ENCODE measurements at regions of chr9 and their contacts with region 1.

Region 1: GRCh38 chr9:95875305-95876137 is at the start of gene ERCC6L2:
- DNase-seq: peak; percentile 93 to 96
- H3K4me3 ChIP-seq: no peak within 1 kb of the TSS; the same call in 1 of the 2 replicates
- H3K27ac ChIP-seq: no peak within 1 kb of the TSS; the same call in 1 of the 2 replicates
- H3K4me1 ChIP-seq: peaks cover 11% of the 10 kb centered on the region
- H3K27me3 ChIP-seq: no peaks in the 10 kb centered on the region
- CTCF ChIP-seq: no peak
- total RNA-seq, gene ERCC6L2: 38.1 and 41.4 TPM in 2 replicates

Region 2: GRCh38 chr9:95696701-95697100 is 178.8 kb before region 1 on chr9:
- CTCF ChIA-PET with region 1: no interaction called
- POLR2A ChIA-PET with region 1: no interaction called
- intact Hi-C with region 1: no loop called
- DNase-seq: no peak
- H3K4me3 ChIP-seq: no peak overlapping the region
- H3K27ac ChIP-seq: no peak overlapping the region
- H3K4me1 ChIP-seq: no peaks in the 10 kb centered on the region
- H3K27me3 ChIP-seq: peaks cover 56% of the 10 kb centered on the region
- CTCF ChIP-seq: no peak

Region 3: DNA sequence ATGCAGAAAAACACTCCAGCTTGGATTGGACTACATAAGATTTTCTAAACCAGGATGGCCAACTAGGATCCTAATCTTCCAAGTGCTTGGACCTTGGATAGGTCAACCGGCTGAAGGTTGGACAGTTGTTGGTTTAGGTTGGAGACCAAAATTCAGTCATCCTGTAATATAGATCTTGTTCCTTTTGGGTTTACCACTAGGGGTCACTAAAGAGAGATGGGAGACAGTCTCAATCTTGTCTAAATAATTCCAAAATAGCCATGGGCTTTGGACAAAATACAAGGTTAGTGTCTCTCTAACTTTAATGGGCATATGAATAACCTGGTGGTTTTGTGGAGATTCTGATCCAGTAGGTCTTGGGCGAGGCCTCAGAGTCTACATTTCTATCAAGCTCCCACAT is 148.8 kb before region 1 on chr9:
- CTCF ChIA-PET with region 1: no interaction called
- POLR2A ChIA-PET with region 1: interaction called, 4 read pairs
- intact Hi-C with region 1: loop called (anchors 5 kb)
- DNase-seq: no peak
- H3K4me3 ChIP-seq: no peak overlapping the region
- H3K27ac ChIP-seq: no peak overlapping the region
- H3K4me1 ChIP-seq: no peaks in the 10 kb centered on the region
- H3K27me3 ChIP-seq: peaks cover 47% of the 10 kb centered on the region; the same call in 1 of the 2 replicates
- CTCF ChIP-seq: peak; percentile 74

Region 4: DNA sequence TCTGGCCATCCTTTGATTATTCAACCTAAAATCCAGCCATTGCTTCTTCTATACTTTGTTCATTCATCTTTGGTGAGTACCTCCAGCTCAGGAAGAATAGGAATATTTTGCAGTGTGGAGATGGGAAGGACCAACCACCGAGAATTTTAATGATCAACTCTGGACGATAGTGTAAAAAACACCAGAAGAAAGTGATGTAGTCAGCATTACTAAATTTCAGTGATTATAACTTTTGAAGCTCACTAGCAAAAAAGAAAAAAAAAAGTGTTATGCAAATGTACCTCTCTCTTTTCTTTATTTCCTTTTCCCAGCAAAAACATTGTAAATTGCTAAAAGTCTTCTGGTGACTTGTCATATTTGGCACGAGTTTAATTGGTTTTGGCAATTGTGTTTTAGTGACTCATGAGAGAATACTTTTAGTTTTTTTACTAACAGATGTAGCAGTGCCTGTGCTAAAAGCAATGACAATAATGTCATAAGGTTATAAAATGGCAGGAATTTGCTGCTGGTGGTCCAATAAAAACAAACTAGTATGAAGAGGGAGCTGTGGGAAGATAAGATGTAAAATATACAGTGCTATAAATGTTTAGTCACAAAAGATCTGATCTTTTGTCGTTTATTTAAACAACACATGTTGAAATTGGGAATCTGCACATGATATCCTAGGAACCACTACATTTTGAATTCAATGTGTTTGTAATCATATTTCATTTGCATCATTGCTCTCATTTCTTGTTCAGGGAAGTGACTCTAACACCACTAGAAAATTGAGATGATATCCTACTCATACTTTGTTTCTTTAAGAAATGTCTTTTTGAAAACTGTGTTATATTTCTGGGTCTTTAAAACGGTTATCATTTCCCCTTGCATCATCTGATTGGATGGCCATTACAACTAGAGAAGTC is 81.3 kb before region 1 on chr9:
- CTCF ChIA-PET with region 1: no interaction called
- POLR2A ChIA-PET with region 1: no interaction called
- intact Hi-C with region 1: loop called (anchors 5 kb)
- DNase-seq: peak in 1 of 2 experiments; percentile 64
- H3K4me3 ChIP-seq: no peak overlapping the region
- H3K27ac ChIP-seq: no peak overlapping the region
- H3K4me1 ChIP-seq: no peaks in the 10 kb centered on the region
- H3K27me3 ChIP-seq: no peaks in the 10 kb centered on the region
- CTCF ChIP-seq: no peak

Region 5: GRCh38 chr9:95815143-95815542 is 60.4 kb before region 1 on chr9:
- CTCF ChIA-PET with region 1: no interaction called
- POLR2A ChIA-PET with region 1: no interaction called
- intact Hi-C with region 1: loop called (anchors 2 kb)
- DNase-seq: peak in 1 of 2 experiments; percentile 52
- H3K4me3 ChIP-seq: no peak overlapping the region
- H3K27ac ChIP-seq: no peak overlapping the region
- H3K4me1 ChIP-seq: no peaks in the 10 kb centered on the region
- H3K27me3 ChIP-seq: no peaks in the 10 kb centered on the region
- CTCF ChIP-seq: no peak

Region 6: DNA sequence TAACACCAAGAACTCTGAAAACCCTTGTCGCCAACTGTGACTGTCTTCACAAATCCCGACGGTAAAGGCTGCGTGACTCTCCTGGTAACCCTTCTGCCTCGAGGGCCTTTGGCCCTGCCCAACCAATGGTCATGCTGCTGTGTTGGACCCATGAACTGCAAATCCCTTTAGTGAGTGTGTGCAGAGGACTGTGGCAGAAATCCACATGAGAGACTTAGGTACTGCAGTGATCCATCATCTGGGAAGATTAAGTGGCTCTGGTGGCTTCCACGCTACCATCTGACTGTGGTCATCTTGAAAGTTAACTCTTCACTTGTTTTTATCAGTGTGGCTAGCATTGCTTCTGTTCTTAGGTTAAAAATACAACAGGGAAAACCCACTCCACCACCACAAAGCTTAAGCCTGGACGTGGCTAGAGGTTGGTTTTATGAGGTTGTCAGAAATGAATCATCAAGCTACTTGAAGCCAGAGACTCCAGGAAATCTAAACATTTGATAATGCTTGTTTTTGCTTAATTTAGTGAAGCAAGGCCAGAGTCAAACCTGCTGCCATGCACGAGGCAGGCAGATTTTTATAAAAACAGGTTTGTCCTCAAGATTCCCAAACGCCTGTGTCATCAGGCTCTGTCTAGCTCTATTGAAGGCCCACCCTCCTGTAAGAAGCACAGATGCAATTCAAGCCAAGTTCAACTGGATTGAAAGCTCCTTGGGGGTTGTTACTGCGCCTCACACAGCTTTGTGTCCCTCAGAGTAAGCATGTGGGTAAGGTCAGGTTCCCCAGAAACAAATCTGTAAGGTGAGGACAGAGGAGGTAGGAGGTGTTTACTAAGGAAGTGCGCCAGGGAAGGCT is 52.7 kb before region 1 on chr9:
- CTCF ChIA-PET with region 1: no interaction called
- POLR2A ChIA-PET with region 1: no interaction called
- intact Hi-C with region 1: loop called (anchors 2 kb)
- DNase-seq: peak; percentile 53 to 93
- H3K4me3 ChIP-seq: no peak overlapping the region
- H3K27ac ChIP-seq: peak overlapping the region; percentile 23
- H3K4me1 ChIP-seq: peaks cover 22% of the 10 kb centered on the region
- H3K27me3 ChIP-seq: no peaks in the 10 kb centered on the region
- CTCF ChIP-seq: no peak

Region 7: DNA sequence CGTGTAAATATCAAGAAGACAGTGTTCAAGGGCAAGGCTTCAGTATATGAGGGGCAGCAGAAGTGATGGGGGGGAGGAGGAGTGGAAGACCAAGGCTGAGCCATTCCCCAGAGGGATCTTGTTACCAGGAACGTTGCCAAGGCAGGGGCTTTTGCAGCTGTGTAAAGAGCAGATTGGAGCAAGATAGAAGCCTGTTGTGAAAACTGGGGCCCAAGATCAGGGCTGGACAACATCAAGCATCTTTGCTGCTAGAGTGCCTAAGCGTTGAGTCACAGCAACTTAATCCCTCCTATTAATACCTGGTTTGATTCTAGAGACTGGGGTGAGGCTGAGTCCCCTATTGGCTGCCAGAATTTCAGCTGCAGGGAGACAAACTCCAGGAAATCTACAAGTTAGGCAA is 18.4 kb before region 1 on chr9:
- CTCF ChIA-PET with region 1: no interaction called
- POLR2A ChIA-PET with region 1: no interaction called
- intact Hi-C with region 1: loop called (anchors 1 kb)
- DNase-seq: peak; percentile 87 to 95
- H3K4me3 ChIP-seq: no peak overlapping the region
- H3K27ac ChIP-seq: peak overlapping the region; percentile 35; the same call in 1 of the 2 replicates
- H3K4me1 ChIP-seq: peaks cover 55% of the 10 kb centered on the region
- H3K27me3 ChIP-seq: no peaks in the 10 kb centered on the region
- CTCF ChIP-seq: no peak